Dendritic cell treated with granulocyte-macrophage colony-stimulating factor and Interleukin-4, amounts not matched to agents 40 ng/mL and 50 ng/mL, for 4 days (primary cell): ENCODE measurements at regions of chr5 and their contacts with region 1.

Region 1: DNA sequence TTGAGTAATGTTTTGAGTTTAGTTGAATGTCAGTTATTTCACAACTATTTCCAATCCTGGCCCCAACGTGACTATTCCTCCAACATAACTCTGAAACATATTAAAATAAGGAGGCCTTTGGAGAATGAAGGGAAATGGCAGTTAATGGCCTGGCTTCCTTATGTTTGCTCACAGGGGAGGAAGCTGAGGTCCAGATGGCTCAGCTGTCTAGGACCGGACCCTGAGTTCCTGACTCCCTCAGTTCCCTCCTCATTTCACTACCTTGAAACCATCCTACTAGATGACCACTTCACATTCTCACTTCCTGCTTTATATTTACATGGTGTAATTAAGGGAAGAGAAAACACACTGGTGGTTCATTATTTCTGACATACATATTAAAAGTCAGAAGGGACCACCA is 6.6 kb downstream of the OTULINL start:
- H3K4me3 Mint-ChIP-seq: no peak overlapping the region
- H3K27ac Mint-ChIP-seq: peak overlapping the region; percentile 54
- H3K4me1 Mint-ChIP-seq: peaks cover 93% of the 10 kb centered on the region
- H3K27me3 Mint-ChIP-seq: no peaks in the 10 kb centered on the region

Region 2: GRCh38 chr5:14218897-14219580 is 369.1 kb before region 1 on chr5:
- intact Hi-C with region 1: no loop called
- H3K4me3 Mint-ChIP-seq: no peak overlapping the region
- H3K27ac Mint-ChIP-seq: peak overlapping the region; percentile 7
- H3K4me1 Mint-ChIP-seq: peaks cover 50% of the 10 kb centered on the region
- H3K27me3 Mint-ChIP-seq: no peaks in the 10 kb centered on the region

Region 3: GRCh38 chr5:14463629-14464028 is 124.5 kb before region 1 on chr5:
- intact Hi-C with region 1: no loop called
- H3K4me3 Mint-ChIP-seq: no peak overlapping the region
- H3K27ac Mint-ChIP-seq: peak overlapping the region; percentile 73
- H3K4me1 Mint-ChIP-seq: peaks cover 35% of the 10 kb centered on the region
- H3K27me3 Mint-ChIP-seq: no peaks in the 10 kb centered on the region

Region 4: DNA sequence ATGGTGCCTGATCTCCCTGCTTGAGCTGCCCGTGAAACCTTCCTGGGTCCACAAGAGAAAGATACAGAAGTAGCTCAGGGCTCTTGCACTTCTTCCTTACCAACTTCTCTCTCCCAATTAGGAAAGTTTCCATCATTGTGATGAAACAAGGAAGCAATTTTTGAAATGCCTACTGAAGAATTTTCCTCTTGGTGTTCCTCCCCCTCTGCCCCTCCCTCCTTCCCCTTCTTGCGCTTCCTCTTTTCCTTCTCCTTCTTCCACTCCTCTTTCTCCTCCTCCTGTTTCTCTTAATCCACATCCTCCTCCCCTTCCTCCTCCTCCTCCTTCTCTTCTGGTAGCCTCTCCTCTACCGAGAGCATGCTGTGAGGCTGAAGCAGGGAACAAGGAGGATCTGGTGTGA is 42.8 kb before region 1 on chr5:
- intact Hi-C with region 1: loop called (anchors 5 kb)
- H3K4me3 Mint-ChIP-seq: peak overlapping the region; percentile 10
- H3K27ac Mint-ChIP-seq: peak overlapping the region; percentile 71
- H3K4me1 Mint-ChIP-seq: peaks cover 73% of the 10 kb centered on the region
- H3K27me3 Mint-ChIP-seq: no peaks in the 10 kb centered on the region

Region 5: GRCh38 chr5:15601274-15601673 is 1013.1 kb after region 1 on chr5:
- intact Hi-C with region 1: no loop called
- H3K4me3 Mint-ChIP-seq: no peak overlapping the region
- H3K27ac Mint-ChIP-seq: no peak overlapping the region
- H3K4me1 Mint-ChIP-seq: no peaks in the 10 kb centered on the region
- H3K27me3 Mint-ChIP-seq: no peaks in the 10 kb centered on the region